Posterior vena cava (tissue), 2 donors: ENCODE measurements at regions of chr6 and their contacts with region 1.

Region 1: GRCh38 chr6:679282-679681 is 13.7 kb downstream of the EXOC2 start:
- DNase-seq: no peak

Region 2: DNA sequence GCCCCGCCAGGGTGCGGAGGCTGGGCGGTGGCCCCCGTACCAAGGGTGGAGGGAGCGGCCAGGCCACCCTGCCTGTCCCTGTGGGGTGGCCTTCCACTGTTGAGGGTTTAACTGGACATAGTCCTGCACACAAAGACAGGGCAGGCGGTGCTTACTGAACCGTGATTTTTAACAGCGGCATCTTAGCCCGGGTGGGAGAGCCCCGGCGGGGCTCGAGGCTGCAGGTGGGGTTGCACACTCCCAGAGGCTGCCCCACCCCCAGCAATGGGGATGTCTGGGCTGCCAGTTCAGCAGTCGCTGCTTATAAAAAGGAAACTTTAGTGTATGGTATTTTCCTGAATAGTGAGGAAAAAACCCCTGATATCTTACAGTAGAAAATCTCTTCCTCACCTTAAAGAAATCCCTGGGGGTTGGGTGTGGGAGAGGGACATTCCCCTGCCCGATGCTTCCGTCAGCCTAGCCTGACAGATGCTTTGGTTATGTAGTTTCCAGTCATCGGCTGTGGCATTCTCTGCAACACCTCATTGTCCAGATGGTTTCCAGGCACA is 208.3 kb before region 1 on chr6:
- intact Hi-C with region 1: no loop called
- DNase-seq: no peak

Region 3: GRCh38 chr6:1190366-1190765 is 511.1 kb after region 1 on chr6:
- intact Hi-C with region 1: loop called in 1 of 2 experiments (anchors 10 kb)
- DNase-seq: no peak